ENCODE measurements at regions of chr6 and their contacts with region 1.

Region 1: DNA sequence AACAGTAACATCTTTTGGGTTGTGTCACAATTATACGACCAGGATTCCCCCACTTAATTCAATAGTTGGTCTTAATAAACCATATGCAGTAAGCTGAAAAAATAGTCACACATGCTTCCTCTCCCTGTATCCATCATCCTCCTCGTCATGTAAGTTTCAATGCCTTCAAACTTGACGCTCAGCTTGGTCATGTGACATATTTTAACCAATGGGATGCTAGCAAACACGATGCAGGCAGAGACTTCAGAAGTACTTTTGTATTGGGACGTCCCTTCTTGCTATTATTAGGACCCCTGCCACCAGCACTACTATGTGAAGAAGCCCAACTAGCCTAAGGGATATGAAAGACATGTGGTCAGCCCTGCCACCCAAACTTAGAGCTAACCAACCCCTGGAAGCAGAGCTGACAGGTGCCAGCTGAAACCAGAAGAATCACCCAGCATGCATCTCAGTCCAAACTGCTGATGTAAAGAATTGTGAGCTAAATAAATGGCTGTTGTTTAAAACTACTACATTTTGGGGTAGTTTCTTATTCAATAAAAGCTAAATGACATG is 49.3 kb downstream of the CGA start:
- DNase-seq: no peak
- ATAC-seq: no peak
- H3K4me3 ChIP-seq: no peak overlapping the region
- H3K27ac ChIP-seq: no peak overlapping the region
- H3K4me1 ChIP-seq: no peaks in the 10 kb centered on the region
- H3K27me3 ChIP-seq: no peaks in the 10 kb centered on the region; the same call in 1 of the 2 replicates
- CTCF ChIP-seq: no peak

Region 2: DNA sequence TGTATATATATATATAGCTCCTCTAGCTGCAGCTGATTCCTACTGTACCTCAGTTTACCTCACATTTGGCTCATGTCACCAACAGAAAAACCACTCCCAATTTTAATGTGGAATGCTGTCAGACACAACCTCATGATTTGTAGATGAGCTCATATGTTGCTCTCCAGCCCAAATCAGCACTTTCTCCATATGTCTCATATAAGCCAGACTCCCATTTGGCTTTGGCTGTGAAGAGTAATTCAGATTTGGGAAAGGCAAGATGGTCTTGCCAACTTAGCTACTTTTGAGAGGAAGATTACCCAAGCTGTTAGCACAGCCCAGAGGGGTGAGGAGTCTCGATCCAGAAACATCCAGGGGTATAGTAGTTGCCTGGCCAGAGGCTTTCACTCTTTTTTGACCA is 1937.9 kb before region 1 on chr6:
- CTCF ChIA-PET with region 1: no interaction called
- POLR2A ChIA-PET with region 1: interaction called, 14 read pairs
- intact Hi-C with region 1: no loop called
- DNase-seq: no peak
- ATAC-seq: no peak
- H3K4me3 ChIP-seq: no peak overlapping the region
- H3K27ac ChIP-seq: no peak overlapping the region
- H3K4me1 ChIP-seq: no peaks in the 10 kb centered on the region
- H3K27me3 ChIP-seq: peaks cover 36% of the 10 kb centered on the region
- CTCF ChIP-seq: no peak

Region 3: DNA sequence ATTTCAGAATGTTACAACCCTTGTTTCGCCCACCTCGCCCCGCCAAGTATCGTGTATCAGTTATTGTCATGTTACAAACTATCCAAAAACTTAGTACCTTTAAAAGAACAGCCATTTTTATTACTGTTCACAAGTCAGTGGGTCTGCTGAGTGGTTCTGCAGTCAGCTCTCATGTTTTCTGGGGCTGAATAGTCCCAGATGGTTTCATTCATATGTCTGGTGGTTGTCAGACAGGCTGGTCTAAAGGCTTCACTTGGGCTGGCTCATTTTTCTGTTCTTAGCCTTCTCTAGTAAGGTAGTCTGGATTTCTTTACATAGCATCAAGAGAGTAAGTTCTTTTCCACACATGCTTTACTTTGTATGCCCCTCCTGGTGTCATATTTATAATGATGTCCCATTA is 118.4 kb after region 1 on chr6:
- CTCF ChIA-PET with region 1: no interaction called
- POLR2A ChIA-PET with region 1: no interaction called
- intact Hi-C with region 1: no loop called
- DNase-seq: no peak
- ATAC-seq: no peak
- H3K4me3 ChIP-seq: no peak overlapping the region
- H3K27ac ChIP-seq: no peak overlapping the region
- H3K4me1 ChIP-seq: peaks cover 22% of the 10 kb centered on the region
- H3K27me3 ChIP-seq: no peaks in the 10 kb centered on the region
- CTCF ChIP-seq: no peak